Natural killer cell (primary cell): ENCODE measurements at regions of chr22 and their contacts with region 1.

Region 1: GRCh38 chr22:23675492-23676415 is 15.1 kb upstream of the RGL4 start:
- DNase-seq: peak in 1 of 2 donors; percentile 17
- ATAC-seq: peak; percentile 60 to 67 (median 61)
- H3K4me3 ChIP-seq: no peak overlapping the region
- H3K4me3 Mint-ChIP-seq: peak overlapping the region; percentile 9
- H3K27ac ChIP-seq: peak overlapping the region; percentile 44
- H3K27ac Mint-ChIP-seq: peak overlapping the region; percentile 62 to 68
- H3K4me1 ChIP-seq: peaks cover 53% of the 10 kb centered on the region
- H3K4me1 Mint-ChIP-seq: peaks cover 17 to 60% of the 10 kb centered on the region in 2 donors
- H3K27me3 ChIP-seq: no peaks in the 10 kb centered on the region
- H3K27me3 Mint-ChIP-seq: no peaks in the 10 kb centered on the region
- CTCF ChIP-seq: no peak

Region 2: DNA sequence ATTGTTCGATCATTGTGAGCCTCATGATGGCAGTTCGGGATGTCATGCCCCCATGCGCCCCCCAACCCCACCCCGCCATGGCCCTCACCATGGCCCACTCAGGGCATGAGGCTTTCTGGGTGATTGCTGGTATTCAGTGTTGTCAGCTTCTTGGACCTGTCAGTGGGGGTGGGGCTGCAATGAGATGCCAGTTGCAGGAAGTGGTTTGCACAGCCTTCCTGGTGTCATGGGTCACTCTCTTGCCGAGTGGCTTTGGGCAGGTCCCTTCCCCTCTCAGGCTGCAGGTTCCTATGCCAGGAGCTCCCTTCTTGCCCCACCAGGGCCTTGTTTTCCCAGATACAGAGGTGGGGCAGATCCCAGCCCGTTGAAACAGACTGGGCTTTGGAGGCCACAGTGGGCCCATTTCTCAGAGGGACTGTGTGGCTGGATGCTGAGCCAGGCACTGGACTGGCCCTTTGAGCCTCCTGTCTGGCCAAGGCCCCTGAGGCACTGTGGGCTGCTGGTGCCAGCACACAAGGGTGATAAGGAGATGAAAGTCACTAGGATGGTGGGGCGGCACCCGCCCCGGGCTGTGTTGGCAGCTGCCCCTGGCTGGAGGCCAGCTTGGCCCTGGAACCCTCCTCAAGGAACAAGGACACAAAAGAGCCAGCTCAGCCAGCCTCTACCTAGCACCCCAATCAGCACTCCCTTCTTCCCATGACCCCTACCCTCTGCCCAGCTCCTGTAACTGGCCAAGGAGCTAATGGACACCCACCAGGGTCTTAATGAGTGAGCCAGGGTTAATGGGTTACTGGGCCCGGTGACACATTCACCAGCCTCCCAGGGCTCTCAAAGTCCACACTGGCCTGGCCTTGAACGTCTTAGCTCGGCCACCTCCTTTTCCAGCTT is 925.7 kb after region 1 on chr22:
- intact Hi-C with region 1: loop called (anchors 5 kb)
- DNase-seq: no peak
- ATAC-seq: peak; percentile 41 to 58 (median 42)
- H3K4me3 ChIP-seq: no peak overlapping the region
- H3K4me3 Mint-ChIP-seq: no peak overlapping the region
- H3K27ac ChIP-seq: no peak overlapping the region
- H3K27ac Mint-ChIP-seq: peak overlapping the region; percentile 46 to 47
- H3K4me1 ChIP-seq: peaks cover 48% of the 10 kb centered on the region
- H3K4me1 Mint-ChIP-seq: peaks cover 16 to 35% of the 10 kb centered on the region in 2 donors
- H3K27me3 ChIP-seq: no peaks in the 10 kb centered on the region
- H3K27me3 Mint-ChIP-seq: no peaks in the 10 kb centered on the region
- CTCF ChIP-seq: no peak